ENCODE measurements at regions of chr10 and their contacts with region 1.

Region 1: DNA sequence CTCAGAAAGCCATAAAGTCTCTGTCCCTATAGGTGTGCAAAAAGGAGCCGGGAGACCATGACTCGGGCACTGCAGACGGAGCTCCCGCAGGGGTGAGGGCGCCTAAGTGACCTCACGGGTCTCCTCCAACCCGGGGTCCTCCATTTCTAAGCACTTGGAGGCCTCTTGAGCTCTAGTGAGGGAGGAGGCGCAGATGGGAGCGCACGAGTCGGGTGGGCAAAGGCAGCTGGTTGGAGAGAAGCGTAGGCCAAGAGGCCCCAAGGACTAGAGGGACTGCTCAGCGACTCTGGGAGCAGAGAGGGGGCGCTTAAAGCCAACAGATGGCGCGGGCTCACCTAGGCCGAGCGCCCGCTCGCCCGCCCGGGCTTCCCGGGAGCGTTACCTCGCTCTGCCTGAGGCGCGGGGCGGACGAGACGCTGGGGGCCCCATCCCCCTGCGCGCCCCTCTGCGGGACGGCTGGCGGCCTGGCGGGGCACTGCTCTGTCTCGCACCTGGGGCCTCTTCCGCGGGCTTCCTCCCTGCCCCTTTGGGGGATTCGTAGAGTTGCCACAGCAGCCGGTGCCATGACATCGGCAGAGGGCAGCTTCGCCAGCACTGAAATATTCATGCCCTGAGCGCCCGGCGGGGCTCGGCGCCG is 518 bp upstream of the CDH23 start:
- DNase-seq: peak; percentile 68 to 83 (median 73)
- ATAC-seq: peak; percentile 84 to 95 (median 92)
- H3K4me3 ChIP-seq: peak overlapping the region; percentile 37 to 79 (median 58)
- H3K27ac ChIP-seq: peak overlapping the region in 3 of 12 donors; percentile 57 to 70 (median 70)
- H3K4me1 ChIP-seq: peaks cover 0 to 28% (median 12%) of the 10 kb centered on the region in 12 donors
- H3K27me3 ChIP-seq: peaks cover 0 to 51% (median 18%) of the 10 kb centered on the region in 9 donors
- CTCF ChIP-seq: peak; percentile 47 to 82 (median 74)
- POLR2A ChIP-seq: no peak

Region 2: DNA sequence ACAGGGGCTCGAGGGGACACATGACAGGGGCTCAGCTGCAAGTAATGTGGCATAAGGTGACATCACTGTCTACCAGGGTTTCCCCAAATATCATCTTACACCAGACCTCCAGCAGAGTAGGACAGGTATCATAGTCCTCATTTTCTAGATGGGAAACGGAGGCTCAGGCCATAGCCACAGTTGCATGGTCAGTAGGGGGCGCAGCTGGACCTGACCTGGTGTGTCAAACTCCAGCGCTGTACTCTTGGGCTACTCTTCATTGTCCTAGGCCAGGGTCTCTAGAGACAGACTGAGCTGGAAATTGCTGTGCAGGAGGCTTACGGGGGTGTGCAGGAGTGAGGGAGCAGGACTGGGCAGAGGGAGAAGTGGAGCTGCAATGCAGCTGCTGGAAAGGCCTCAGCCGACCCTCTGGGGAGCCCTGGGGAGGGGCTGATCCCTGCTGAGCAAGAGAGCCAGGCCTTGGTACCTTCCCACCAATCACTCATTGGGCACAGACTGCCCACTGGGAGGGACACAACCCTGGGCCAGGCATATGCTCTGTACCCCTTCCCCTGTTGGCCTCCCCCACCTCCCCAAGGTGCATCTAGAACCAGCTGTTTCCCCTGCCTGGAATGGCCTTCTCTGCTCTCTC is 90.4 kb after region 1 on chr10:
- intact Hi-C with region 1: loop called (anchors 1 to 10 kb)
- DNase-seq: peak in 4 of 5 donors; percentile 28 to 57 (median 46)
- ATAC-seq: peak in 3 of 4 donors; percentile 46 to 67 (median 49)
- H3K4me3 ChIP-seq: no peak overlapping the region
- H3K27ac ChIP-seq: no peak overlapping the region
- H3K4me1 ChIP-seq: peaks cover 0 to 13% (median 0%) of the 10 kb centered on the region in 12 donors
- H3K27me3 ChIP-seq: no peaks in the 10 kb centered on the region
- CTCF ChIP-seq: peak; percentile 31 to 63 (median 49)
- POLR2A ChIP-seq: no peak

Region 3: DNA sequence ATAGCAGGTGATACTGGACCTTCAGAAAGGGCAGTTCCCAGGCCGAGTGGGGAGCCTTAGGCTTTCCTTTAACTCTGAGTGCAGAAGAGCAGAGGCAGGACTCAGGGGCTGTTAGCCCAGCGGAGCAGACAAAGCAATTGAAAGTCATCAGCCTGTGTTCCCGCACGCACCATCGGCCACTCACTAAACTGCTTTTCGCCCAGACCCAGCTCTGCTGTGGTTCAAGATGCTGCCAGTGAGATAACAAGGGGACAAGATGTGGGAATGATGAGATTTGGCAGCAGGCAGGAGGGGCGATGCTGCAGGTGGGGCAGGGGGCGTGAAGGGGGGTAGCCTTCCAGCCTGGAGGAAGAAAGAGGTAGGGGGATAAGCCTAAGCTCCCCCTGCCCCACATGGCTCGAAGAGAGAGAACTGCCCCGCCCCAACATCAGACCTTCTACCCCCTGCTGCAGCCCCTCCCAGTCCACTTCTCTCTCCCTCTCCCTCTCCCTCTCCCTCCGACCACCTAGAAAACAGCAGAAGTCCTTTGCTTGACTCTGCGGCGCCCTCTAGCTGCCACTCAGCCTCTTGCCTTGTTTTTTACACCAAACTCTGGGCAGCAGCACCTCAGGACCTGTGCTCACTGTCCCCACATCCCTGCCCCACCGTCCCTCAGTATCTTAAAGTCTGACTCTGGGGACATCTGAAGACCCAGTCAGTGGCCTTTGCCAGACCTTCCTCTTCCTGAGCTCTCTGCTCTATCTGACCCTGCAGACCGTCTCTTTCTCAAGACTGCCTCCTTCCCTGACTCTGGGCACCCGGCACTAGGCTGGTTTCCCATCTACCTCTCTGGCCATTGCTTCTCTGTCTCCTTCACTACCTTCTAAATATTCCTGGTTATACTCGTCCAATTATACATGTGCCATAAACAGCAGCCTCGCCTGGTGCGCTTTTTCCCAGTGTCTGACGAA is 212.9 kb after region 1 on chr10:
- intact Hi-C with region 1: loop called in 5 of 10 experiments (anchors 2 to 10 kb)
- DNase-seq: peak; percentile 72 to 87 (median 81)
- ATAC-seq: peak in 3 of 4 donors; percentile 22 to 68 (median 58)
- H3K4me3 ChIP-seq: no peak overlapping the region
- H3K27ac ChIP-seq: no peak overlapping the region
- H3K4me1 ChIP-seq: peaks cover 3 to 22% (median 17%) of the 10 kb centered on the region in 12 donors
- H3K27me3 ChIP-seq: no peaks in the 10 kb centered on the region
- CTCF ChIP-seq: peak; percentile 60 to 86 (median 82)
- POLR2A ChIP-seq: no peak

Region 4: DNA sequence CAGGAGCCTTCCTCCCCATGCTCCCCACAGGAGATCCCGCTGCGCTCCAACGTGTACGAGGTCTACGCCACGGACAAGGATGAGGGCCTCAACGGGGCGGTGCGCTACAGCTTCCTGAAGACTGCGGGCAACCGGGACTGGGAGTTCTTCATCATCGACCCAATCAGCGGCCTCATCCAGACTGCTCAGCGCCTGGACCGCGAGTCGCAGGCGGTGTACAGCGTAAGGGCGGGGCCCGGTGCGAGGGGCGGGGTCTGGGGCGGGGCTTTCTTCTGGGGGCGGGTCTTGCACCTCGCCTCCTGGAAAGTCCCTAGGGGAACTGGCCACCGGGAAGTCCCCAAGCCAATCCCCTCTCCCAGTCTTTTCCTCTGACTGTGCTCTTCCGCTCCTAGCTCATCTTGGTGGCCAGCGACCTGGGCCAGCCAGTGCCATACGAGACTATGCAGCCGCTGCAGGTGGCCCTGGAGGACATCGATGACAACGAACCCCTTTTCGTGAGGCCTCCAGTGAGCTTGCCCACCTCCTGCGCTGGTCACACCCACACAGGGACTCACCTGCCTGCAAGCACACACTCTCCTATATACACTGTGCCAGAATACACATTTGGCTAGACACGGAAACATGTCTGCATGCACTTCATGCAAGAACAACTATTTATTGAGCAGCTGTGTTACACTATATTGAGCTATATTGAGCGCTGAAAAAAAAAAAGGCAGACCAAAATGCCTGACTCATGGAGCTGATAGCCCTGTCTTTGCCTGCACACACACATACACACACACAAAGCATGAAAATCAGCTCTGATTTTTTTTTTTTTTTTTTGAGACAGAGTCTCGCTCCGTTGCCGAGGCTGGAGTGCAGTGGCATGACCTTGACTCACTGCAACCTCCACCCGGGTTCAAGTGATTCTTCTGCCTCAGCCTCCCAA is 409.8 kb after region 1 on chr10:
- intact Hi-C with region 1: loop called in 3 of 10 experiments (anchors 5 to 10 kb)
- DNase-seq: peak in 2 of 5 donors; percentile 52 to 73
- ATAC-seq: peak in 3 of 4 donors; percentile 63 to 71 (median 69)
- H3K4me3 ChIP-seq: no peak overlapping the region
- H3K27ac ChIP-seq: no peak overlapping the region
- H3K4me1 ChIP-seq: peaks cover 0 to 31% (median 0%) of the 10 kb centered on the region in 12 donors
- H3K27me3 ChIP-seq: peaks cover 0 to 10% (median 0%) of the 10 kb centered on the region in 9 donors
- CTCF ChIP-seq: no peak
- POLR2A ChIP-seq: no peak

Region 5: GRCh38 chr10:72146071-72146470 is 749.9 kb after region 1 on chr10:
- intact Hi-C with region 1: no loop called
- DNase-seq: no peak
- ATAC-seq: no peak
- H3K4me3 ChIP-seq: no peak overlapping the region
- H3K27ac ChIP-seq: no peak overlapping the region
- H3K4me1 ChIP-seq: peaks cover 0 to 14% (median 2%) of the 10 kb centered on the region in 12 donors
- H3K27me3 ChIP-seq: no peaks in the 10 kb centered on the region
- CTCF ChIP-seq: no peak
- POLR2A ChIP-seq: no peak